ENCODE measurements at regions of chr6 and their contacts with region 1.

Region 1: GRCh38 chr6:97059473-97059872 is 134.9 kb downstream of the KLHL32 start:
- DNase-seq: no peak
- H3K4me3 ChIP-seq: no peak overlapping the region
- H3K27ac ChIP-seq: no peak overlapping the region
- H3K4me1 ChIP-seq: no peaks in the 10 kb centered on the region
- H3K27me3 ChIP-seq: no peaks in the 10 kb centered on the region
- CTCF ChIP-seq: peak in 5 of 6 experiments; percentile 37 to 59 (median 47)
- POLR2A ChIP-seq: no peak

Region 2: DNA sequence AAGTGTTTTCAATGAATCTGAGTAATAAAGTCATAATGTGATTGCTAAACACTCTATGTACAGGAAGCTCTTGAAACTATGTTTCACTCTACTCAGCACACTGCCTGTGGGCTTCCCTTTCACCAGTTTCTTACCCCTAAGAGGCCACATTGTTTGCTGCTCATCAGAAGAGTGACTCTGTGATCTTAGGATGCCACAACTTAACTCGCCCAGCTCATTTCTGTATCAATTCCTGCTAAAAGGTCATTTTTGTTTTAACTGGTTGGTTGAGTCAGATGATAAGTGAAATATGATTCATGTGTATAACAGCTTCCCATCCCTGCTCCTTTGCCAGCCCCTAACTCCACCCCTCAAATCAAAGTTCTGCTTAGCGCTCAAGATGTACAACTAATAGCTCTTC is 152.0 kb before region 1 on chr6:
- intact Hi-C with region 1: loop called (anchors 10 kb)
- DNase-seq: no peak
- H3K4me3 ChIP-seq: no peak overlapping the region
- H3K27ac ChIP-seq: no peak overlapping the region
- H3K4me1 ChIP-seq: no peaks in the 10 kb centered on the region
- H3K27me3 ChIP-seq: peaks cover 0 to 11% (median 0%) of the 10 kb centered on the region in 4 donors
- CTCF ChIP-seq: no peak
- POLR2A ChIP-seq: no peak